ENCODE measurements at regions of chr2 and their contacts with region 1.

Region 1: DNA sequence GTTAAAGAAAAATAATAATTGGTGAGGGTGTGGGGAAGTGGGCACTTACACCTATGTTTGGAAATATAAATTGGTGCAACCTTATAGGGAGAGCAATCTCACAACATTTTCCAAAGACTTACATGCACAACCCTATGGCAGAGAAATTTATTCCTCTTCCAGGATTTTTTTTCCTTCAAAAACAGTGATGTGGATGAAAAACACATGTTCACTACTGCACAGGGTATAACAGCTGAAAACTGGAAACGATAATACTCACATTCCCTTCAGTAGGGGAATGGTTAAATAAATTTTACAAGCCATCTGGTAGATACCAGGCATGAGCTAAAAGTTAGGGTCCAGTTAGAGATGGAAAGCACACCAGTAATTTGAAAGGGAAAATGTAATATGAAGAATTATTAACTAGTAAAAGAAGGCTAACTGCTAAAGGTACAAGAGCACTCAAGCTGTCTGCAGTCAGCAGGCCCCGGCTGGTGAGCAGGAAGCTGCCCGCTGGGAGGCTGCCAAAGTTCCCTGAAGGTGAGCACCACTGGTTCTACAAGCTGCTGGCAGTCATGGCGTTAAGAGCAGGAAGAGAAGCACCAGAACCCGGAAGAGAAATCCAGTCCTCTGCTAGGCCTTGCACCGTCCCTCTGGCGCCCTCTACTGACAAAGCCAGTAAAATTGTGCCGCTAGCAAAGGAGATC is 28.4 kb upstream of the CASP8 start:
- DNase-seq: peak; percentile 88
- H3K4me3 Mint-ChIP-seq: peak overlapping the region; percentile 93
- H3K27ac Mint-ChIP-seq: peak overlapping the region; percentile 87
- H3K4me1 Mint-ChIP-seq: peaks cover 57% of the 10 kb centered on the region
- H3K27me3 Mint-ChIP-seq: no peaks in the 10 kb centered on the region

Region 2: GRCh38 chr2:200901459-200902072 is 330.4 kb before region 1 on chr2:
- intact Hi-C with region 1: loop called (anchors 1 kb)
- DNase-seq: peak; percentile 68
- H3K4me3 Mint-ChIP-seq: no peak overlapping the region
- H3K27ac Mint-ChIP-seq: peak overlapping the region; percentile 59
- H3K4me1 Mint-ChIP-seq: peaks cover 18% of the 10 kb centered on the region
- H3K27me3 Mint-ChIP-seq: no peaks in the 10 kb centered on the region

Region 3: DNA sequence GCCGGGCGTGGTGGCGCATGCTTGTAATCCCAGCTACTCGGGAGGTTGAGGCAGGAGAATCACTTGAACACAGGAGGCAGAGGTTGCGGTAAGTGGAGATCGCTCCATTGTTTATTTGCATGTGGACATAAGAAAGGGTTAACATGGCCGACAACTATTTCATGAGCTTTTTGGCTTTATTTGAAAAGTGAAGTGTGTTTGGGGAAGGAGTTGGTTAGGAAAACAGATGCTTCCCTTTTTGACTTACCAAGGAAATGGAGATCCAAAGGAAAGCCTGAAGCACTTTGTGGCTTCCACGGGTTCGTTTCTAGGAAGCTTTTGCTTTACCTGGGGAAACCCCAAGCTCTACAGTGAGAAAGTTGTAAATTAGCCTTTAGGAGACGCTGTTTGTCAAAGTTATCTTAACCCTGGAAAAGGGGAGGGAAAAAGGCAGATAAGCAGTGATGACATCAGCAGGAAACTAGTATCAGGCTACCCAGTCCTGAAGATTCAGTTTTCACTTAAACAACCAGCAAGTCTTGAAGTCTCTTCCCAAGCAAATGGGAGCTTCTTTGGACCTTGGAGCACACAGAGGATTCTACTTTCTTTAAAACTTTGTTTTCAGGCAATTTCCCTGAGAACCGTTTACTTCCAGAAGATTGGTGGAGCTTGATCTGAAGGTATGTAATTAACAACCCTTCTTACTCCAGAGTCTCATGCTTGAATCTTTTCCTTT is 49.1 kb before region 1 on chr2 and contains the start of gene CASP10:
- intact Hi-C with region 1: loop called (anchors 1 kb)
- DNase-seq: peak; percentile 48
- H3K4me3 Mint-ChIP-seq: peak within 1 kb of the TSS; percentile 96
- H3K27ac Mint-ChIP-seq: peak within 1 kb of the TSS; percentile 90
- H3K4me1 Mint-ChIP-seq: peaks cover 65% of the 10 kb centered on the region
- H3K27me3 Mint-ChIP-seq: peaks cover 4% of the 10 kb centered on the region
- total RNA-seq, gene CASP10: 13.5 and 15.7 TPM in 2 replicates

Region 4: DNA sequence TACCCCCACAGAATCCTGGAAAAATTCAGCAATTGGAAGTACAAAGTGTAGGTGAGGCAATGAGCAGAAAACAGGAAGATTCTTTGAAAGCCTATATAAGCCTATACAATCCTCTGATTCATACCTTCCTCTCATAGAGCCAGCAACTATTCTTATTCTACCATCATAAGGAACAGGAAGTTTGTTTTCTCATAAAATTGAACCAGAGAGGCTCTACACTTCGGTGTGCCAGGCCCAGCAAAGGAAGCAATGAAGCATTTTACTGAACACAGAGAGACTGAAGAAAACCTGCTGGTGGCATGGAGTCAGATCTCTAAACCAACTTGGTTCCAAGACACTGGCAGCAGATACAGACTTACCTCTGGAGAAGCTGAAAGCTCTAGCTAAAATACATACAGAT is 47.2 kb after region 1 on chr2:
- intact Hi-C with region 1: loop called (anchors 1 kb)
- DNase-seq: no peak
- H3K4me3 Mint-ChIP-seq: no peak overlapping the region
- H3K27ac Mint-ChIP-seq: peak overlapping the region; percentile 70
- H3K4me1 Mint-ChIP-seq: peaks cover 29% of the 10 kb centered on the region
- H3K27me3 Mint-ChIP-seq: no peaks in the 10 kb centered on the region

Region 5: GRCh38 chr2:201532686-201533304 is 300.9 kb after region 1 on chr2:
- intact Hi-C with region 1: loop called (anchors 10 kb)
- DNase-seq: no peak
- H3K4me3 Mint-ChIP-seq: no peak overlapping the region
- H3K27ac Mint-ChIP-seq: peak overlapping the region; percentile 6
- H3K4me1 Mint-ChIP-seq: no peaks in the 10 kb centered on the region
- H3K27me3 Mint-ChIP-seq: peaks cover 2% of the 10 kb centered on the region

Region 6: GRCh38 chr2:202178342-202178958 is 946.5 kb after region 1 on chr2:
- intact Hi-C with region 1: loop called (anchors 5 kb)
- DNase-seq: peak; percentile 31
- H3K4me3 Mint-ChIP-seq: no peak overlapping the region
- H3K27ac Mint-ChIP-seq: no peak overlapping the region
- H3K4me1 Mint-ChIP-seq: peaks cover 12% of the 10 kb centered on the region
- H3K27me3 Mint-ChIP-seq: peaks cover 4% of the 10 kb centered on the region

Measured in activated T-helper 1 cell treated with anti-CD3 and anti-CD28 coated beads, Interleukin-12 subunit alpha, Interleukin-12 subunit beta, Interleukin-2, Interleukin-4 antibody, amounts not matched to agents 30 ng/mL and 10 ng/mL and 1 ng/mL, durations not matched to agents 14 hours and 24 hours and 36 hours (primary cell).